ENCODE measurements at regions of chr9 and their contacts with region 1.

Region 1: GRCh38 chr9:4382722-4383317 is 83.0 kb upstream of the GLIS3 start:
- DNase-seq: no peak
- H3K4me3 ChIP-seq: no peak overlapping the region
- H3K27ac ChIP-seq: no peak overlapping the region
- H3K4me1 ChIP-seq: no peaks in the 10 kb centered on the region
- H3K27me3 ChIP-seq: no peaks in the 10 kb centered on the region
- CTCF ChIP-seq: peak; percentile 16 to 50 (median 42)
- POLR2A ChIP-seq: no peak

Region 2: GRCh38 chr9:3992924-3993323 is 389.9 kb before region 1 on chr9:
- intact Hi-C with region 1: no loop called
- DNase-seq: peak; percentile 16
- H3K4me3 ChIP-seq: no peak overlapping the region
- H3K27ac ChIP-seq: no peak overlapping the region
- H3K4me1 ChIP-seq: peaks cover 5% of the 10 kb centered on the region
- H3K27me3 ChIP-seq: no peaks in the 10 kb centered on the region
- CTCF ChIP-seq: no peak
- POLR2A ChIP-seq: no peak

Region 3: DNA sequence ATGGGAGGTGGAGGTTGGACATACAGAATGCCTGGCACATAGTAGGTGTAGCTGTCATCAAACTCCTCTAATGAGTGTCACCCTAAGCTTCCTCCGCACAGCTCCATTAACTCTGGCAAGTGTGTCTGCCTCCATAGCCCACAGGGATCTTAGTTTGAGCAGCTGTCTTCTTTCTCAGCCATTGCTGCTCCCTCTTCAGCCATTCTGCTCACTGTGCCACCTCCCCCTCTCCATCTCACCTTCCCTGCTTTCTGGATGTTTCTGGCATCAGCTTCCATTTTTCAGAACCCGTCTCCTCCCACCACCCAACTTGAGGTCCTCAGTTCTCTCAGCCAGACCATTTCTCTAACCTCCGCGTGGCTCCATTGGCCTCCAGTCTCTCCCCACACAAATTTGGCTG is 69.7 kb before region 1 on chr9:
- intact Hi-C with region 1: no loop called
- DNase-seq: no peak
- H3K4me3 ChIP-seq: no peak overlapping the region
- H3K27ac ChIP-seq: no peak overlapping the region
- H3K4me1 ChIP-seq: peaks cover 3% of the 10 kb centered on the region
- H3K27me3 ChIP-seq: no peaks in the 10 kb centered on the region
- CTCF ChIP-seq: no peak
- POLR2A ChIP-seq: no peak

Region 4: GRCh38 chr9:4422495-4422894 is 39.7 kb after region 1 on chr9:
- intact Hi-C with region 1: no loop called
- DNase-seq: no peak
- H3K4me3 ChIP-seq: no peak overlapping the region
- H3K27ac ChIP-seq: no peak overlapping the region
- H3K4me1 ChIP-seq: no peaks in the 10 kb centered on the region
- H3K27me3 ChIP-seq: no peaks in the 10 kb centered on the region
- CTCF ChIP-seq: no peak
- POLR2A ChIP-seq: no peak

Region 5: DNA sequence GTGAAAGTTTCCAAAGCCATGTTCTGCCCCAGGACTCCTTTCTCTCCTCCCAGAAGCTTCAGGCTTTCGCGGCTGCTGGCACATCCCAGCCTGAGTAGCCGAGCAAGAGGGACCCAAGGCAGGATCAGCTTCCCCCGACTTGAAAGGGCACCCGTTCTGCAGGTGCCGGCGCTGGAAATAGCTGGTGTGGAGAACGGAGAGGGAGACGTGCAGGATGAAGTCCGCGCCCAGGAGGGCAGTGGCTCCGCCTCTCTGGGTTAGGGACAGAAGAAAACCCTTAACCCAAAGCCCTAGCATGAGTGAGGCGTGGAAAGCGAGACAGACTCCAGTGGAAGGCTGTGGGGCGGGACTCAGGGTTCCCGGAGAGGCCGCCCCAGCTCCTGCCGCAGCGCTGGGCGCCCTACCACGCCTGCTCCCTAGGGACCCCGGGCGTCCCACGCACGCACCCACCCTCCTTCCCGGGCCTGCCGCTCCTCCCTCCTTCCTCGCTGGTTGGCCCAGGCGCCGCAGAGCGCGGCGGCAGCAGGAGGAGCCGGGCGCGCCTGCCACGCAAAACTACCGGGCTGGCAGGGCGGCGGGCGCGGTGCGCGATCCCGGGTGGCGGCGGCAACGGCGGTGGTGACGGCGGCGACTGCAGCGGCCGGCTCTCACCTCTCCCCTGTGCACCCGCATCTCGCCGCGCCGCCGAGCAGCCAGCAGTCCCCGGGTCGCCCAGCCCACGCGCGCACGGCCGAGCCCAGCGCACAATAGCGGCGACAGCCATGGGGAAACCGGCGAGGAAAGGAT is 107.3 kb after region 1 on chr9 and contains the start of gene SLC1A1:
- intact Hi-C with region 1: no loop called
- DNase-seq: peak; percentile 46
- H3K4me3 ChIP-seq: peak within 1 kb of the TSS; percentile 58 to 66
- H3K27ac ChIP-seq: peak within 1 kb of the TSS in 1 of 2 donors; percentile 60
- H3K4me1 ChIP-seq: peaks cover 7% of the 10 kb centered on the region
- H3K27me3 ChIP-seq: no peaks in the 10 kb centered on the region
- CTCF ChIP-seq: no peak
- POLR2A ChIP-seq: no peak
- total RNA-seq, gene SLC1A1: 0.63 to 1.1 TPM

Region 6: DNA sequence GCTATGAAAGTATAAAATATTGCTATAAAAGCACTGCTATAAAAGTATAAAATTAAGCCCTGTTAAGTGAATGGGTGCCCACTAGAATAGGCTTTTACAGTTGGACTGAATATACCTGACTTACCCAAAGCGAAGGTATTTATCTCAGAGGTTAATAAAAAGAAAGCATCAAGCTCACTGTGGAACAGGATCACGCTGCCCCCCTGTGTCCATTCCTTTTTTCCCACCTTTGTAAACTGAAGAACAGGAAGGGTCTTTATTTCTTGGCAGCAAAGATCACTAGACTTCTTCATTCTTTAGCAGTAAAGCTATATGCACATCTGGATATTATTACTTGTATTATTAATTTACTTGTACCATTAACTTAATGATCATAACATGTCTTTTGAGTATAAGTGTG is 257.2 kb after region 1 on chr9:
- intact Hi-C with region 1: loop called (anchors 10 kb)
- DNase-seq: peak; percentile 28
- H3K4me3 ChIP-seq: no peak overlapping the region
- H3K27ac ChIP-seq: no peak overlapping the region
- H3K4me1 ChIP-seq: no peaks in the 10 kb centered on the region
- H3K27me3 ChIP-seq: no peaks in the 10 kb centered on the region
- CTCF ChIP-seq: peak in 2 of 3 experiments; percentile 25 to 36
- POLR2A ChIP-seq: no peak